Activated T-helper 1 cell treated with anti-CD3 and anti-CD28 coated beads, Interleukin-12 subunit alpha, Interleukin-12 subunit beta, Interleukin-2, Interleukin-4 antibody, amounts not matched to agents 30 ng/mL and 10 ng/mL and 1 ng/mL, durations not matched to agents 14 hours and 24 hours and 36 hours (primary cell): ENCODE measurements at regions of chr9 and their contacts with region 1.

Region 1: GRCh38 chr9:37119907-37120842 is at the start of gene ZCCHC7:
- DNase-seq: peak; percentile 95
- H3K4me3 Mint-ChIP-seq: peak within 1 kb of the TSS; percentile 97
- H3K27ac Mint-ChIP-seq: peak within 1 kb of the TSS; percentile 99
- H3K4me1 Mint-ChIP-seq: peaks cover 32% of the 10 kb centered on the region
- H3K27me3 Mint-ChIP-seq: no peaks in the 10 kb centered on the region
- total RNA-seq, gene ZCCHC7: 22.1 and 26.0 TPM in 2 replicates

Region 2: GRCh38 chr9:36258208-36258988 is 861.8 kb before region 1 on chr9 and contains the start of gene GNE:
- intact Hi-C with region 1: no loop called
- DNase-seq: peak; percentile 98
- H3K4me3 Mint-ChIP-seq: peak within 1 kb of the TSS; percentile 96
- H3K27ac Mint-ChIP-seq: peak within 1 kb of the TSS; percentile 96
- H3K4me1 Mint-ChIP-seq: peaks cover 15% of the 10 kb centered on the region
- H3K27me3 Mint-ChIP-seq: no peaks in the 10 kb centered on the region
- total RNA-seq, gene GNE: 21.7 and 22.7 TPM in 2 replicates

Region 3: GRCh38 chr9:36487482-36488388 is 632.4 kb before region 1 on chr9:
- intact Hi-C with region 1: loop called (anchors 1 kb)
- DNase-seq: peak; percentile 91
- H3K4me3 Mint-ChIP-seq: peak overlapping the region; percentile 87
- H3K27ac Mint-ChIP-seq: peak overlapping the region; percentile 87
- H3K4me1 Mint-ChIP-seq: peaks cover 53% of the 10 kb centered on the region
- H3K27me3 Mint-ChIP-seq: no peaks in the 10 kb centered on the region

Region 4: GRCh38 chr9:37027582-37028419 is 92.4 kb before region 1 on chr9:
- intact Hi-C with region 1: loop called (anchors 2 kb)
- DNase-seq: peak; percentile 80
- H3K4me3 Mint-ChIP-seq: peak overlapping the region; percentile 70
- H3K27ac Mint-ChIP-seq: peak overlapping the region; percentile 36
- H3K4me1 Mint-ChIP-seq: peaks cover 8% of the 10 kb centered on the region
- H3K27me3 Mint-ChIP-seq: peaks cover 87% of the 10 kb centered on the region

Region 5: DNA sequence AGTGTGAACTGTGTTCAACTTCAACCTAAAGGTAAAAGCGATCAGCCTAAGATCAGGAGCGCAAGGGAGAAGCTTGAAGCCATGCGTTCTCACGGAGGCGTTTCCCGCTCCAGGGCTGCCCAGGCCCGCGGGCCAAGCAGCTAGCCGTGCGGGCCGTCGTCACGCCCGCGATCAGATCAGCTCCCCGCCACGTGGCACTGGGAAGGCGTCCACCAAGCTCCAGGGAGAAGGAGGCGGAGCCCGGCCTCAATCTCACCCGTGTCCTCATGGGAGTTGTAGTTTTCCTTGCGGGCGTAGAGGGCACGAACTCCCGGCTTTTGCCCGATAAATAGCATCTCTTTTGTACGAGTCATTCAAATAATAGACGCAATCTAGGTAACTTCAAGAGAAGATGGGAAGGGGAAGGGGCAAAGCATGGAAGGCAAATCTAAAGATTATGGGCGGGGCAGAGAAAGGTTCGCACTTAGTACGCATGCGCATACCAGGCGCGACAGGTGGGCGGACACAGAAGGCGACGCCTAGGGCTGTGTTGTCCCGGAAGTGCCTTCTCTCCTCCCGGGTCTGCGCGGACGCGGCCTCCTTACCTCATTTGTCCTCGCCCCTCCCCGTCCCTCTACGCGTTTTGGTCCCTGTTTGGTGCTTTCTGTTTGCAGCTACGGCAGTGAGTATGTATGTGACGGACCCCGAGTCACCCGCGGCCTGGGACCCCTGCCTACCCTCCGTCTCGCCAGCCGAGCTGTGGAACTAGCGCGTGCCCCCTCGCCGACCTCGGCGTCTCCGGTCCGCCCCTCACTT is 40.6 kb before region 1 on chr9:
- intact Hi-C with region 1: loop called (anchors 1 kb)
- DNase-seq: peak; percentile 92
- H3K4me3 Mint-ChIP-seq: peak overlapping the region; percentile 95
- H3K27ac Mint-ChIP-seq: peak overlapping the region; percentile 97
- H3K4me1 Mint-ChIP-seq: peaks cover 44% of the 10 kb centered on the region
- H3K27me3 Mint-ChIP-seq: peaks cover 2% of the 10 kb centered on the region

Region 6: GRCh38 chr9:37290940-37291485 is 170.8 kb after region 1 on chr9:
- intact Hi-C with region 1: loop called (anchors 1 kb)
- DNase-seq: no peak
- H3K4me3 Mint-ChIP-seq: peak overlapping the region; percentile 36
- H3K27ac Mint-ChIP-seq: peak overlapping the region; percentile 79
- H3K4me1 Mint-ChIP-seq: peaks cover 37% of the 10 kb centered on the region
- H3K27me3 Mint-ChIP-seq: no peaks in the 10 kb centered on the region

Region 7: GRCh38 chr9:37465249-37466036 is 345.3 kb after region 1 on chr9 and contains the start of gene ZBTB5:
- intact Hi-C with region 1: loop called (anchors 1 kb)
- DNase-seq: peak; percentile 98
- H3K4me3 Mint-ChIP-seq: peak within 1 kb of the TSS; percentile 97
- H3K27ac Mint-ChIP-seq: peak within 1 kb of the TSS; percentile 95
- H3K4me1 Mint-ChIP-seq: peaks cover 47% of the 10 kb centered on the region
- H3K27me3 Mint-ChIP-seq: no peaks in the 10 kb centered on the region
- total RNA-seq, gene ZBTB5: 9.6 and 11.2 TPM in 2 replicates